ENCODE measurements at regions of chr11 and their contacts with region 1.

Region 1: GRCh38 chr11:119666463-119667131 is 62.4 kb downstream of the NECTIN1 start:
- DNase-seq: peak; percentile 87
- ATAC-seq: peak; percentile 89

Region 2: GRCh38 chr11:119728651-119729580 is 62.3 kb after region 1 on chr11 and contains the start of gene NECTIN1:
- intact Hi-C with region 1: loop called (anchors 1 kb)
- DNase-seq: peak; percentile 95
- ATAC-seq: peak; percentile 94
- total RNA-seq, gene NECTIN1: 20.0 TPM

Region 3: GRCh38 chr11:120013325-120014270 is 347.0 kb after region 1 on chr11:
- intact Hi-C with region 1: loop called (anchors 5 kb)
- DNase-seq: no peak
- ATAC-seq: peak; percentile 59

Region 4: DNA sequence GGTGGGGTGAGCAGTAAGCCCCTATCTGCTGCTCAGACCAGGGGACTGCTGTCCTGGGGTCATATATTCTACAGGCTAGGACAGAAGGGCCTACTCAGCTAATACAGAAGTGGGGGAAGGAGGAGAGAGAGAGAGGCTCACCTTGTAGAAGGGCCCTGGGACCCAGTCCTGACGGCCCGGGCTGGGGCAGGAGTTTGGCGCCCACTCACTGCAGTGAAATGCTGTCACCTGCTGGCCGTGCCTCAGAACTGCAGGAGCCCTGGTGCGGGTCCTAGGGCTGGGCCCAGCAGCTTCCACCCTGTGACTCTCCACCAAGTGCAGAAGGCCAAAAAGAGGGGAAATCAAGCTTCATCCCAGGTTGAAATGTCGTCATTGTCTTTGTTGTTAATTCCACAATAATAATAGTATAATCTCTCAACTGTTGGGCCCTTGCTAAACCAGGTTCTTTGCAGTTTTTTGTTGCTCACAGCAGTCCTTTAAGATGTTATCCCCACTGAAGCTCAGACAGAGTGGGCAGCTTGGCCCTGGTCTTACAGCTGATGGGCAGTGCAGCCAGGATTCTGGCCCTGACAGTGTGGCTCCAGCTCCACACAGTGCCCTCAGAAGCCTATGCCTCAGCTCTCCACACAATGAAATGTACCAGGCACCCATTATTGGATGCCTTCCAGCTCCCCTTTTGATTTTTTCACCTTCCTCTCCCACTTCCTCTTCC is 441.7 kb after region 1 on chr11:
- intact Hi-C with region 1: loop called (anchors 1 kb)
- DNase-seq: peak; percentile 74
- ATAC-seq: peak; percentile 76